Cardiac septum (tissue), 1 donor: ENCODE measurements at regions of chr6 and their contacts with region 1.

Region 1: DNA sequence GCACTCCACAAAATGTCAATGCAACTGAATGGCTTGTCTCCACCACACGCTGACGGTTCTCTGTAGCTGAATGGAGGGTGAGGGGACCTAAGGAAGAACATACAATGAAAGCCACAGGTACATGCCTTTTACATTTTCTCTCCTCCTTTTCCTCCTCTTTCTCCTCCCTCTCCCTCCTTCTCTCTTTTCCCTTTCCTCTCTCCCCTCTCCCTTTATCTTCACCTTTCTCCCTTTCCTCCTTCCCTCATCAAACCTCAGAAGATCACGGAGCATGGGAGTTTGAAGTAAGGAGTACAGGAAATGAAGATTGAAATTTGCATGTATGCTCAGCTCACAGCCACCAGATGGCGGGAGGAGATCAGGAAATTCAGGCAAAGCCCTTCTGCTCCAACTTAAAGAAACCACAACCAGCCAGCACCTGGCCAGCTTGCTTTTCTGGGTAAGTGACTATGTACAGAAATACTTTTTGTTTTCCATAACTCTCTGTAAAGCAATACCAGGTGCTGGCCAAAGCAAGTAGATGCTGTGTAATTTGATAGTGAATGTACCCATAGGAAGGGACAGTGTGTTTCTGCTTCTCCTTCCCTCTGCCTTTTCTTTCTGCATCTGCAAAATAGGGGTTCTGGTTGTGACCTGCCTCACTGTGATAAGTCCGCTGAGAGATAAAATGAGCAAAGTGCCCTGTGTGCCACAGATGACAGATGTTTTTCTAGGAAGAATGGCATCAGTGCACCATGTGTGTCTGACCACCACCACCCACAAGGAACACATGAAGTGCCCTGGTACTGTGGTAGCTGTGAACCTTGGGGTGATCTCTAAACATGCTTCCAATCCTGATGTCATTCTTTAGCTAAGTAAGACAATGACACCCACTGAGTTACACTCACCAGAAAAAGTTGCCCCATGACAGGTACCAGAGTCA is 18.6 kb upstream of the FOXO3 start:
- DNase-seq: no peak

Region 2: DNA sequence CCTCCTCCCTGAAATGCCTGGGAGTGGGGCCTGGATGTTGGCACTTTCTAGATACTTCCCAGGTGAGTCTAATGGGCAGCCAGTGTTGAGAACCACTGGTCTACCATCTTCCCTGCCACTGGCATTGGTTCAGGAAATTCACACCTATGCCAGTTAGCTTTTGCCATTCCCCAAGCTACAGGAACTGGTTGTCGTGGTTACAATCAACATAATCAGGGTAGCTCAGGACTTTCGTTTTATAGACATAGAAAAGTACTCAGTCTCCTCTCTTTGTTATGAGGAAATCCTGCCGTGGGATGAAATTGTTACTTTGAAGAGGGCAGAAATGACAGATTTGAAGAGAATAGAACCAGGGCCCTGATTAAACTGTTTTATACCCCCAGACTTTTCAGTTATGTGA is 109.3 kb before region 1 on chr6:
- intact Hi-C with region 1: no loop called
- DNase-seq: no peak

Region 3: GRCh38 chr6:108782179-108783041 is 240.3 kb after region 1 on chr6:
- intact Hi-C with region 1: loop called (anchors 5 kb)
- DNase-seq: peak; percentile 92

Region 4: GRCh38 chr6:108835218-108835850 is 293.2 kb after region 1 on chr6:
- intact Hi-C with region 1: loop called (anchors 1 kb)
- DNase-seq: peak; percentile 95

Region 5: DNA sequence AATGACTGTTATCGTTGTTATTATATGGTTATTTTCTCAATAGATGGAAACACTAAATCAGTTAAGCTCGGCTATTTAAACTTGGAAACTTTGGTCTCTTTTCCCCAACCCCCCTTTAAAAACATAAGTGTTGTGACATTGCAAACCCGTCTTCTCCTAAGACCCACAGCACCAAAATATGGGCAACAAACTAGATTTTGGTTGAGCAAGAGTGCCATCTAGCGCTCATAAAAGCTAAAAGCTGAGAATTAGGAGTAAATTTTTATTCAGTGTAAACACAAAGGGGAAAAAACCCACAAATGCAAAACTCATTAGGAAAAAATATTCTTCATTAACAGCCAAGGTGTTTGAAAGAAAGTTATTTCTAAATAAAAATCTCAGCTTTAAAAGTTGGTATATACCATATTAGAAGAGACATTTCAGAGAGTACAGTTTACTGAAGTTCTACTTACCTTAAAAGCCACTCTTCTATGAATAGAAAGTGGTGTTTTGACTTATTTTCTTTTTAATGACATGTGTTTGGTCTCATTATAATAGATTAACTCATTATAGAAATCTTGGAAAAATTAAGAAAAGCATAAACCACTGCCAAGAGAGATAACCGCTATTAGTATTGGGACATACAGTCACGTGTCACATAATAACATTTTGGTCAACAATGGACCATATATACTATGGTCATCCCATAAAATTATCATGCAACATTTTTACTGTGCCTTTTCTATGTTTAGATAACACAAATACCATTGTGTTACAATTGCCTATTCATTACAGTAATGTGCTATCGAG is 531.4 kb after region 1 on chr6:
- intact Hi-C with region 1: loop called (anchors 2 kb)
- DNase-seq: no peak